ENCODE measurements at regions of chr2 and their contacts with region 1.

Region 1: DNA sequence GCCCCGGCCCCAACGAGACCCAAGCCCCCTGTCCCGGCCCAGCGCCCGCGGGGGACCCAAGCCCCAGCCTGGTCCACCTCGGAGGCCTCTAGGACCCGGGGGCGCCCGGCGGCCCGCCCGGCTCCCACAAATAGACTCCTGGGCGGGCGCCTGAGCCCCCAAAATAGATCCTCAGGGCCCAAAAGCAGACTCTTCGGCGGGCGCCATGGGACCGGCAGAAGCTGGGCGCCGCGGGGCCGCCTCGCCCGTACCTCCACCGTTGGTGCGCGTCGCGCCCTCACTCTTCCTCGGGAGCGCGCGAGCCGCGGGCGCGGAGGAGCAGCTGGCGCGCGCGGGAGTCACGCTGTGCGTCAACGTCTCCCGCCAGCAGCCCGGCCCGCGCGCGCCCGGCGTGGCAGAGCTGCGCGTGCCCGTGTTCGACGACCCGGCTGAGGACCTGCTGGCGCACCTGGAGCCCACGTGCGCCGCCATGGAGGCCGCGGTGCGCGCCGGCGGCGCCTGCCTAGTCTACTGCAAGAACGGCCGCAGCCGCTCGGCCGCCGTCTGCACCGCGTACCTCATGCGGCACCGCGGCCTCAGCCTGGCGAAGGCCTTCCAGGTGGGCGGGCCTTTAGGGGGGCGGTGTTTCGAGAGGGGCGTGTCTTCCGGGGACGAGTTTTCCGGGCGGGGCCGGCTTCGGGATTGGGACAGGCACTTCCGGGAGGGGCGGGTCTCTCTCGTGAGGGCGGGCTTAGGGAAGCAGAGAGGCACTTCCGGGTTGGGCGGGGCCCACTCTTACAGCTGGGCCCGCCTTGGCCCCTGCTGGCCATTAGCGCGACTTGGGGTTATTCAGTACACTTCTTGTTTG is 546 bp downstream of the DUSP28 start:
- DNase-seq: peak; percentile 74 to 98
- ATAC-seq: peak; percentile 68 to 82
- H3K4me3 ChIP-seq: peak overlapping the region; percentile 87
- H3K27ac ChIP-seq: peak overlapping the region; percentile 98 to 100
- H3K4me1 ChIP-seq: peaks cover 39% of the 10 kb centered on the region
- CTCF ChIP-seq: no peak
- EP300 ChIP-seq: no peak
- POLR2A ChIP-seq: peak; percentile 78
- RAD21 ChIP-seq: no peak

Region 2: DNA sequence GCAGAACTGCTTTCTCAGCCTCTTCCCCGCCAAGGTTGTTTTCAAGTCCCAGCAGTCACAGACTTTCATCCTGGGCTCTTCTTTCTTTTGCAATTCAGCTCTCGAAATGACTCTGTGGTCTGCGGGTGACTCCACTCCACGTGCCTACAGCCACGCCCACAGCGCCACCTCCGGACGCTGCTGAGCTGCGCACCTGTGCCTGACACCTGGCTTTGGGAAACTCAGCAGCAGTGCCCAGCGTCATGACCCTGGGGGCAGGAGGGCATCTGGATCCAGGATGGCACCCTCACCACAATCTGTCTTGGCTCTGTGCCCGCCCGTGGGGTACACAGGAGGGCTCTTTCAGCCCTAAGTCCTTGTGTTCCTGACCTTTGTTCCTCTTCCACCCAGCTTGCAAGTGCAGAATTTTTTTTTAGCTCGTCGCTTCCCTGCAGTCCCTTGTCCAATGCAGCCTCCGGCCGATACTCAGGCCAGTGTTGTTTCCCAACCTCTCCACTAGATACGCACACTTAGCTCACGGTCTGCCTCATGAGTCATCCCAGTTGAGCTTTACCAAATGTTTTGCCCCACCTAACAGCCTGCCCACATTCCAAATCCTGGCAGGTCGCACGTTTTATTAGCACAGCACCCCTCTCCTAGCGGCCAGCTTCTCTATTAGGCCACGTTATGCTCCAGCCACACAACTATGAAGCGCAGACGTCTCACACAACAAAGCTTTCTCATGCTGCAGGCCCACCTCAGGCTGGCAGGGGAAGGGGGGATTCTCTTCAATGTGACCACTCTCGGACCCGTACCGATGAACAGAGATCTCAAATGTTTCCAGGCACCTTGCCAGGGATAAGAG is 19.3 kb after region 1 on chr2:
- CTCF ChIA-PET with region 1: interaction called, 76 read pairs
- POLR2A ChIA-PET with region 1: interaction called, 38 read pairs
- DNase-seq: peak in 1 of 2 experiments; percentile 82
- ATAC-seq: peak; percentile 88 to 90
- H3K4me3 ChIP-seq: 0 out of 3 replicates have a peak overlapping the region, but pooled peaks have one; percentile 2
- H3K27ac ChIP-seq: peak overlapping the region; percentile 29 to 81
- H3K4me1 ChIP-seq: peaks cover 31% of the 10 kb centered on the region
- CTCF ChIP-seq: no peak; the same call in 2 of the 3 replicates
- EP300 ChIP-seq: no peak
- POLR2A ChIP-seq: no peak
- RAD21 ChIP-seq: no peak

Region 3: DNA sequence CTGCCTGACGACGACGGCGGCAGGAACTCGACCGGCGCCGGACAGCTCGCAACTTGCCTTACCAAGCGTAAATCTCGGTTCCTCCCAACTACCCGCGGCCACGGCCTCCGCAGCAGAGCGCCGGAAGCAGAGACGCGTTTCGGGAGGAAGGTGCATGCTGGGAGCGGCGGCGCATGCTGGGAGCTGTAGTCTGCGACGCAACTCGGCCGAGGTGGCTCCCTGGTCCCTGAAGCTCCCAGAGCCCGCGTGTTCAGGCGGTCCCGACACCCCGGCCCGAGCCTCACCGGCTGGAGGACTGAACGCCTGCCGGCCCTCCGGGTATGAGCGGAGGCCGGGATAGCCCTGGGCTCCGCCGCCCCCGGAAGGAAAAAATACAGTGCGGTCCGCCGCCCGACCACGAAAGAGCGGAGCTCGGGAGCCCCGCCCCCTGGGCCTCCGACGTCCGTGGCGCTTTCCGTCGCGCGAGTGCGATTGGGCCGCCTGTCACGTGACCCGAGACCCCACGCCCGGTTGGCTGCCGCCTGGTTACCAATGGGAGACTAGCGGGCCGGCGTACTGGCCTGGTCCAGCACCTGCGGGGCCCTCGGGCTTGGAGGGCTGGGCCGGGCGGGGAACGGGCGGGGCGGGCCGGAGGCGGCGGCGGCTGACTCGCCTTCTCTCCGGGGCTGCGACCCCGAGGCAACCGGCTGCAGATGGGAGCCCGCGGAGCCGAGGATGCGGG is 25.7 kb after region 1 on chr2 and contains the start of gene CAPN10:
- CTCF ChIA-PET with region 1: interaction called, 35 read pairs
- POLR2A ChIA-PET with region 1: interaction called, 38 read pairs
- DNase-seq: peak; percentile 88 to 95
- ATAC-seq: peak; percentile 94 to 96
- H3K4me3 ChIP-seq: peak within 1 kb of the TSS; percentile 82
- H3K27ac ChIP-seq: peak within 1 kb of the TSS; percentile 95 to 96
- H3K4me1 ChIP-seq: peaks cover 23% of the 10 kb centered on the region
- CTCF ChIP-seq: no peak
- EP300 ChIP-seq: no peak
- POLR2A ChIP-seq: peak; percentile 61
- RAD21 ChIP-seq: no peak
- polyA plus RNA-seq, gene CAPN10: 8.4 and 9.5 TPM in 2 replicates

Measured in A549 (cell line).